ENCODE measurements at regions of chr1 and their contacts with region 1.

Region 1: DNA sequence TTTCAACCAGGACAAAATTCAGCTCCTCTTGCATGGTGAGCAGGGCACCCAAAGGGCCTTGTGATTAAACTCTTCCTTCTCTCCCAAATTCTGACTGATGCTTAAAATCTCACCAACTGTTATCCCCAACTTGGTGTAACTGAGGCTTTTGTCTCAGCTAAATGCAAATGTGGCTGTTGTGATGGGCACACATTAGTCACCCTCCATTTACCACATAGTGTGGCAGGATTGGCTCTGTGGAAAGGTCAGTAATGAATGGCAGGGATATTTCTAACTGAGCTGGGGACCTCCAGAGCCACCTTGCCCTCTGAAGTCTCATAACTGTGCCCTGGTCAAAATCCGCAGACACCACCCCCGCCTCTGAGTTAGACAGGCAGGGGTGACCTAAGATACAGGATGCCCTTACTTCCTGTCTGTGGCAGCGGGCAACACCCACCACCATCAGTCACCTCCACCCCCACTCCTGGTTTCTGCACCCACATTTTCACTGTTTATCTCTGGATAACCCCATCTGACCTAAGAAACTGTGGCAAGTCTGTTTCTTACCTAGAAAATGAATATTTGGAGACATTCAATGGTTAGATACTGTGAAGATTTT is 25.4 kb upstream of the RGS16 start:
- DNase-seq: no peak
- H3K4me3 ChIP-seq: no peak overlapping the region
- H3K27ac ChIP-seq: no peak overlapping the region
- H3K4me1 ChIP-seq: peaks cover 16% of the 10 kb centered on the region
- H3K27me3 ChIP-seq: no peaks in the 10 kb centered on the region
- CTCF ChIP-seq: no peak

Region 2: DNA sequence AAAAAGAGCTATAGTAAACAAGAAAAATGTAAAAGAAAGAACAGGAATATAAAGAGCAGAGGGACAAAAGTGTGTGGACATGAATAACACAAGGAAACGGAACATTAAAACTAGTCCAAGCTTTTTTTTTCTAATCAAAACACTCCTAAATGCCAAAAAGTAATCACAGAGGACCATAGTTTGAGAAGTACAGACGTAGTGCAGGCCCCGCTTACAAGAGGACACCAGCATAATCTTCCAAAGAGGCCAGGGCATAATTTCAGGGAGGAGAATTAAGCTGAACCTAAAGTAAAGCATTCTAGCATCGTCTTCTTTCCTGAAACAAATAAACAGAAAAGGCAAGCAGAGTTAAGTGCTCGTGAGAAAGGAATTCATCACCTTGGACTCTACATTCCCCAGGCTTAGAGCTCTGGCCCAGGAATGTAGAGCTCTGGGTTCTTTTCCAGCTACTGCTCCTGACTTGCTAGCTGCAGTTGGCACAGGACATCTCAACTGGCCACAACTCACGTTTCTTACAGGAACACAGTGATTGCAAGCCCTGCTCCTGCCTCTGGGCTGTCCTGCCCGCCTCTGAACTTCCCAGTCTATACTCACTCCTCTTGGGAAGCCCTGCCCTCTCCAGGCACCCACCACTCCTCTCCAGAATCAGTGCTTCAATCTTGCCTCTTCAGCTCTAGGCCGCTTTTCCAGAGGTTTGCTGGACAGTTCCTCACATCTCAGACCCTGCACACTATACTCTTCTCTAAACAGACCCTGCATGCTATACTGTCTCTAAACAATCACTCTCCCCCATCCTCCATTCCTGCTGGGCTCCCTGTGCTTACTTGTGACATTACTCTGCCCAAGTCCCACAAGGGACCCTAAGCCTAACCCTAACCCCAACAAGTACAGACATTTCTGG is 45.0 kb after region 1 on chr1:
- CTCF ChIA-PET with region 1: no interaction called
- dilution Hi-C with region 1: loop called (anchors 5 kb)
- in situ Hi-C with region 1: no loop called
- intact Hi-C with region 1: no loop called
- DNase-seq: no peak
- H3K4me3 ChIP-seq: no peak overlapping the region
- H3K27ac ChIP-seq: no peak overlapping the region
- H3K4me1 ChIP-seq: no peaks in the 10 kb centered on the region
- H3K27me3 ChIP-seq: peaks cover 4% of the 10 kb centered on the region
- CTCF ChIP-seq: no peak